A549 (cell line): ENCODE measurements at regions of chr7 and their contacts with region 1.

Region 1: DNA sequence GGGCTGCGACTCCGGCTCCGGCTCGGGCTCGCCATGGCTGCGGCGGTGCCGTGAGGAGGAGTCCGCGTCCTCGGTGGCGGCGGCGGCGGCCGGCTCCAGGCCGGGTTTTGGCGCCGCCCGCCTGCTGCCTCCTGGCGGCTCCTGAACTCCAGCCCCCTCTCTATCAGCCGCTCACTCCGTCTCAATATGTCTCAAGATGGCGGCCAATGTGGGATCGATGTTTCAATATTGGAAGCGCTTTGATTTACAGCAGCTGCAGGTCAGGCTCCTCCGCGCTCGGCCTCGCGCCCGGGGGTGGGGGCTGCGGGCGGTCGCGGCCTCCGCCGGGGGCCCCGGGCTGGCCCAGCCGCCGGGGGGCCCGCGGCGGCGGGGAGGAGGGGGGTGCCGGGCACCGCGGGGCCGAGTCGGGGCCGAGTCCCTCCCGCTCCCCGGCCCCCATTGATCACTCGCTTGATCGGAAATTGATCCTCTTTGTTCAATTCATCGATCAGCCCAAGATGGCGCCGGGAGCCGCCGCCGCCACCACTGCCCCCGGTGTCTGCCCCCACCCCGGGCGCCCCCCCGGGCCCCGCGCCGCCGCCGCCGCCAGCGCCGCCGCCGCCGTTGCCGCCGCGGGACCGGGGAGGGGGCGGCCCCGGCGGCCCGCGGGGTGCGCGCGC is 1.5 kb upstream of the CUX1 start:
- DNase-seq: peak; percentile 72 to 84
- ATAC-seq: peak; percentile 69 to 75
- H3K4me3 ChIP-seq: peak overlapping the region; percentile 92
- H3K27ac ChIP-seq: peak overlapping the region; percentile 99 to 100
- H3K4me1 ChIP-seq: peaks cover 37% of the 10 kb centered on the region; the same call in 2 of the 3 replicates
- CTCF ChIP-seq: peak; percentile 52
- EP300 ChIP-seq: no peak
- POLR2A ChIP-seq: peak; percentile 12; the same call in 1 of the 2 replicates
- RAD21 ChIP-seq: no peak

Region 2: DNA sequence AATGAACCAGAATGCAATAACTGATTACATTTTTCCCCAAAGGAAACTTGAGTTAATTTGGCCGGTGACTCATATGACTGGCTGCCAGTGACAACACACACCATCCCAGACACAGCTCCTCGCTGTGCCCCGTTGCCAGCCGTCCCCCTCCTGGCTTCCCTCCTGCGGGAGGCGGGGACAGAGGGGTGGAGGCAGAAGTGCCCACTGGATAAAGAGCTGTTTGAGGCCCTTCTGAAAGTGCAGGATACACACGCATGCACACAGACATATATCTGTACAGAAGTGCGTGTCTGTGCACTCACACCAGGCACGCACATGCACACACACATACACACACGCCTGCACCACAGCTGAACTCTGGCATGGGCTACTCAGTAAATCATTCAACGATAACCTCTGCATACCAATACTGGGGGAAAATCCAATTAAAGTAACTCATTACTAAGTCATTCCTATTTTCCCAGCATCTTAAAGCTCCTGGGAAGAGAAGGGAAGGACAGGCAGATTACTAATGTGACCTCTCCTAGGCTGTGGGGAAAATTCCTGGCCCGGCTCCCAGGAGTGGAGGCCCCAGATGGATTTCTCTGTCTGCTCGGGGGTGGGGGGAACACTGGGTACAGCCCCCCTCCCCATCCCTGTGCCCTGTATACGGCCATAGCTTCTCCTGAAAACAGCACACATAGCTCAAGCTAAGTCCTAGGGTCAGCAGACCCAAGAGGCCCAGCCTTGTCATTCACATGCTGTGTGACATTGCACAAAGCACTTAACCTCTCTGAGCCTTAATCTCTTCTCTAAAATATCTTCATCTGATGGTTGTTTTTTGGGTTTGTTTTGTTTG is 134.6 kb before region 1 on chr7:
- CTCF ChIA-PET with region 1: interaction called, 10 read pairs
- POLR2A ChIA-PET with region 1: no interaction called
- DNase-seq: peak; percentile 78 to 89
- ATAC-seq: peak; percentile 94
- H3K4me3 ChIP-seq: no peak overlapping the region
- H3K27ac ChIP-seq: peak overlapping the region; percentile 46 to 80; a peak in 5 of 6 replicates
- H3K4me1 ChIP-seq: peaks cover 27% of the 10 kb centered on the region
- CTCF ChIP-seq: no peak
- EP300 ChIP-seq: no peak
- POLR2A ChIP-seq: no peak
- RAD21 ChIP-seq: no peak

Region 3: GRCh38 chr7:101718363-101718762 is 97.6 kb before region 1 on chr7:
- CTCF ChIA-PET with region 1: no interaction called
- POLR2A ChIA-PET with region 1: no interaction called
- DNase-seq: no peak
- ATAC-seq: peak in 1 of 2 experiments; percentile 28; a peak in 4 of 6 replicates
- H3K4me3 ChIP-seq: no peak overlapping the region
- H3K27ac ChIP-seq: peak overlapping the region in 1 of 2 experiments; percentile 43; a peak in 3 of 6 replicates
- H3K4me1 ChIP-seq: no peaks in the 10 kb centered on the region
- CTCF ChIP-seq: no peak
- EP300 ChIP-seq: no peak
- POLR2A ChIP-seq: no peak
- RAD21 ChIP-seq: no peak

Region 4: GRCh38 chr7:101743241-101743994 is 72.5 kb before region 1 on chr7:
- CTCF ChIA-PET with region 1: interaction called, 11 read pairs
- POLR2A ChIA-PET with region 1: interaction called, 4 read pairs
- DNase-seq: peak; percentile 60 to 65
- ATAC-seq: peak; percentile 71 to 85
- H3K4me3 ChIP-seq: peak overlapping the region; percentile 55
- H3K27ac ChIP-seq: peak overlapping the region; percentile 72 to 86
- H3K4me1 ChIP-seq: peaks cover 25% of the 10 kb centered on the region
- CTCF ChIP-seq: peak; percentile 74
- EP300 ChIP-seq: no peak
- POLR2A ChIP-seq: no peak
- RAD21 ChIP-seq: peak in 1 of 2 experiments; percentile 63; a peak in 2 of 5 replicates

Region 5: DNA sequence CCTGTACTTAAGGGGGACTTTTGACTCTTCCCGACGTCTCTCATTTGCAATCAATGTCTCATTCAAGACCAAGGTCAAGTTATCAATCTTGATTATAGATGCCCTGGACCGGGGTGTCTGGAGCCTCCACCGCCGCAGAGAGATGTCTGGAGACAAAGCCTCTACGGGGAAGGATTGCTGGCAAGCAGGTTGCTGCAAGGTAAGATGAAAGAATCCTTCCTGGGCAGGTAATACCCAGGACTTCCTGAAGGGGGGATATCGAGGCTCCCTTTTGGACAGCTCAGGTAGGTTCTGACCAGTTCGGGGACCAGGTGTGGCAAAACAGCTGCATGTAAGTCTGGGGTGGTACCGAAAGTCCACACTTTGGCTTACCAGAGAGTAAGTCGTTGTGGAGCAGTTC is 11.0 kb before region 1 on chr7:
- CTCF ChIA-PET with region 1: interaction called, 10 read pairs
- POLR2A ChIA-PET with region 1: no interaction called
- DNase-seq: peak; percentile 29 to 49
- ATAC-seq: peak; percentile 75 to 76
- H3K4me3 ChIP-seq: no peak overlapping the region
- H3K27ac ChIP-seq: no peak overlapping the region
- H3K4me1 ChIP-seq: 0 out of 3 replicates have a peak, but pooled peaks cover 4% of the 10 kb centered on the region
- CTCF ChIP-seq: no peak
- EP300 ChIP-seq: no peak
- POLR2A ChIP-seq: no peak
- RAD21 ChIP-seq: no peak

Region 6: DNA sequence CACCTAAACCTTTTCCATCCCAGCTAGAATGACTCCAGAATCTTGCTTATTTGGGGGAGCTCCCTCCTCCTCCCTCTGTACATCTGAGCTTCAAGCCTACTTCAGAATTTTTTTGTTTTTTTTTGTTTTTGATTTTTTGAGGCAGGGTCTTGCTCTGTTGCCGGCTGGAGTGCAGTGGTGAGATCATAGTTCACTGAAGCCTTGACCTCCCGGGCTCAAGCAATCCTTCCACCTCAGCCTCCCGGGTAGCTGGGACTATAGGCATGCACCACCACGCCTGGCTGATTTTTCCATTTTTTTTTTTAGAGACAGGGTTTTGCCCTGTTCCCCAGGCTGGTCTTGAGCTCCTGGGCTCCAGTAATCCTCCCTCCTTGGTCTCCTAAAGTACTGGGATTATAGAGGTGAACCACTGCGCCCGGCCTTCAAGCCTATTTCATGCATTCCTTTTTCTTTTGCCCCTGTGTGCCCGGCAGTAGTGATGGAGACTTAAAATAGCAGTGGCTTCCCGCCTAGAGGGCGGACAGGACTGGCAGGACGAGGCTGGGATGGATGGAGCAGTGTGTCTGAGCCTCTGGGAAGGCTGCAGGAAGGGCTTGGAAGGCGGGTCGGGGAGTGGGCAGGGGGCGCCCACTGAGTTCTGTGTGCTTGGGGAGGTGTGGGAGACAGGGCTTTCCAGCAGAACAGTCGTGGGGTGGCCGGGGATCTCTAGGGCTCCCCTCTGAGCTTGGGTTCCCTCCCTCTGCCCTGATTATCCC is 10.3 kb after region 1 on chr7:
- CTCF ChIA-PET with region 1: interaction called, 10 read pairs
- POLR2A ChIA-PET with region 1: no interaction called
- DNase-seq: no peak
- ATAC-seq: no peak; a peak in 1 of 6 replicates
- H3K4me3 ChIP-seq: no peak overlapping the region
- H3K27ac ChIP-seq: 0 out of 6 replicates have a peak overlapping the region, but pooled peaks of 1 of the 2 experiments have one; percentile 0
- H3K4me1 ChIP-seq: peaks cover 23% of the 10 kb centered on the region; the same call in 2 of the 3 replicates
- CTCF ChIP-seq: no peak
- EP300 ChIP-seq: no peak
- POLR2A ChIP-seq: no peak
- RAD21 ChIP-seq: no peak